ENCODE measurements at regions of chr19 and their contacts with region 1.

Region 1: GRCh38 chr19:43555185-43555770 is 20.0 kb downstream of the XRCC1 start:
- DNase-seq: peak; percentile 93
- H3K4me3 Mint-ChIP-seq: no peak overlapping the region
- H3K27ac Mint-ChIP-seq: peak overlapping the region; percentile 44
- H3K4me1 Mint-ChIP-seq: peaks cover 13% of the 10 kb centered on the region
- H3K27me3 Mint-ChIP-seq: no peaks in the 10 kb centered on the region

Region 2: DNA sequence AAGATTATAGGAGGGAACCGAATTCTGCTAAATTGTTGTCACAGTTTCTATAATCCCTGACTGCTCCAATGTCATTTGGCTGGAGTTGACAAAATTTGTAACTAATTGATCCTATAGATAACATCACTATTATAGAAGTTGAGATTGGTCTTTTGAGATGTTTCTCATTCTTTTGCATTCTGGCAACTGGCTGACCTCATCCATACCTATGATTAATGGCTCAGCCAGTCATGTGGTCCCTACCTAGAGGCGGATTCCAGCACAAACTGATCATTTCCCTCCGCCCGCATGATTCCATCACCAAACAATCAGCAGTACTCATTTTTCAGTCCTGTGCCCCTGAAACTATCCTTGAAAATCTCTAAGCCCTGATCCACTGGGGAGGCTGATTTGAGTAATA is 477.0 kb before region 1 on chr19:
- CTCF ChIA-PET with region 1: no interaction called
- intact Hi-C with region 1: no loop called
- DNase-seq: no peak
- H3K4me3 Mint-ChIP-seq: no peak overlapping the region
- H3K27ac Mint-ChIP-seq: no peak overlapping the region
- H3K4me1 Mint-ChIP-seq: no peaks in the 10 kb centered on the region
- H3K27me3 Mint-ChIP-seq: no peaks in the 10 kb centered on the region

Region 3: DNA sequence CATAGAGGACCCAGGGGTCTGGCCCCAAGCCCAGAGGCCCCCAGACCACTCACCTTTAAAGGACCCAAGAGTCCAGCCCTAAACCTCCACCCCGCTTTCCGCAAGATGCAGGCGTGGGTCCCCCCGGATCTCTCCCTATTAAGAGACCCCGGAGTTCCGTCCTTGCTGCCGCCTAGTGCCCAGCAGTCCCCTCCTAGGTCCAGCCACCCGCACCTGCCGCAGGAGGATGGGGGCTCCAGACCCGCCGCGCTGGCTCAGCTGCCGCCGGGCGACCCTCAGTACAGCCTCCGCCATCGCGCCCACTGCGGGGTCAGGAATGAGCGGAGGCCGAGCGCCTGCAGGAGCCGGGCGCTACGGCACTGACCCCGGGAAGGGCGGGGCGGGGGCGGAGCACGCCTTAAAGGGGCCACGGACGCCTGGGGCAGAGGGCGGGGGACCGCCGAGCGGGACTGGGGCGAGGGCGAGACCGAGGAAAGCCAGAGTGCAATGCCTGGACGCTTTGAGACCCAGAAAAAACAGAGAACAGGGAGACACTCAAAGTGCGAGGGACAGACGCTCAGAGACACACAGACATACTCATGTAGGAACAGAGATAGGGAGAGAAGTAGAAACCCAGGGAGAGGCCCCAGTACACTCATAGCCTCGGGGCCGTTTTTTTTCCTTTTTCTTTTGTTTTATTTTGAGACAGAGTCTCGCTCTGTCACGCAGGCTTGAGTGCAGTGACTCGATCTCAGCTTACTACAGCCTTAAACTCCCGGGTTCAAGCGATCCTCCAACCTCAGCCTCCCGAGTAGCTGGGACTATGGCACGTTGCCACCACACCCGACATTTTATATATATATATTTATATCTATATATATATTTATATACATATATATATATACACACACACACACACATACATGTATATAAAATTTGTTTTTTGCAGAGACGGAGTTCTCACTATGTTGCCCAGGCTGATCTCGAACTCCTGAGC is 28.1 kb before region 1 on chr19 and contains the start of gene ETHE1:
- CTCF ChIA-PET with region 1: interaction called, 19 read pairs
- intact Hi-C with region 1: no loop called
- DNase-seq: peak; percentile 73
- H3K4me3 Mint-ChIP-seq: peak within 1 kb of the TSS; percentile 97
- H3K27ac Mint-ChIP-seq: peak within 1 kb of the TSS; percentile 96
- H3K4me1 Mint-ChIP-seq: peaks cover 22% of the 10 kb centered on the region
- H3K27me3 Mint-ChIP-seq: no peaks in the 10 kb centered on the region
- total RNA-seq, gene ETHE1: 62.1 to 64.4 TPM

Region 4: DNA sequence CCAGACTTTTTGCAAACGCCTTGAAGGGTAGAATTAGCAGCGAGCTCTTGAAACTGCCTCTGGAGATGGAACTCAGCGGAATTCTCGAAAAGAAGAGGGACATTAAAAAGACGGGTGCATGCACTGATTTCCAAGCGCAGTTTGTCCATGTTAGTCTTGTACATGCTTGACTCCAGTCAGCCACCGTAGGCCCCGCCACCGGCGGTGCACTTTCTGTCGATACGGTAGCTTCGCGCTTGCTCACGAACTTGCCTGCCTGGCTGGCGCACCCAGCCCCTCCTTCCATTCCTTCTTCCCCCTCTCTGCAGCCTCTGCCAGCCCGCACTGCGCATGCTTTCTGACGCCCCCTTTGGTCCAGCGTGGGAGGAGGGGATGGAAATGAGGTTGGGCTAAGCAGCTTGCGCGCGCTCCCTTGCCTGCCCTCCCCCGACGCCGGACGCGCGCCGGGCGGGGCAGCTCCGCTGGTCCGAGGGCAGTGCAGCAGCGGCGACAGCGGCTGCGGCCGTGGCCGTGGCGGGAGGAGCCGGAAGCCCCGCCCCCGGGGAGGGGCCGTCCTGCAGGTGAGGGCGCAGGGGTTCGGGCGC is 22.2 kb before region 1 on chr19 and contains the start of gene ZNF575:
- CTCF ChIA-PET with region 1: interaction called, 28 read pairs
- intact Hi-C with region 1: no loop called
- DNase-seq: peak; percentile 92
- H3K4me3 Mint-ChIP-seq: peak within 1 kb of the TSS; percentile 80
- H3K27ac Mint-ChIP-seq: peak within 1 kb of the TSS; percentile 88
- H3K4me1 Mint-ChIP-seq: peaks cover 19% of the 10 kb centered on the region
- H3K27me3 Mint-ChIP-seq: no peaks in the 10 kb centered on the region
- total RNA-seq, gene ZNF575: 3.1 to 5.2 TPM

Region 5: DNA sequence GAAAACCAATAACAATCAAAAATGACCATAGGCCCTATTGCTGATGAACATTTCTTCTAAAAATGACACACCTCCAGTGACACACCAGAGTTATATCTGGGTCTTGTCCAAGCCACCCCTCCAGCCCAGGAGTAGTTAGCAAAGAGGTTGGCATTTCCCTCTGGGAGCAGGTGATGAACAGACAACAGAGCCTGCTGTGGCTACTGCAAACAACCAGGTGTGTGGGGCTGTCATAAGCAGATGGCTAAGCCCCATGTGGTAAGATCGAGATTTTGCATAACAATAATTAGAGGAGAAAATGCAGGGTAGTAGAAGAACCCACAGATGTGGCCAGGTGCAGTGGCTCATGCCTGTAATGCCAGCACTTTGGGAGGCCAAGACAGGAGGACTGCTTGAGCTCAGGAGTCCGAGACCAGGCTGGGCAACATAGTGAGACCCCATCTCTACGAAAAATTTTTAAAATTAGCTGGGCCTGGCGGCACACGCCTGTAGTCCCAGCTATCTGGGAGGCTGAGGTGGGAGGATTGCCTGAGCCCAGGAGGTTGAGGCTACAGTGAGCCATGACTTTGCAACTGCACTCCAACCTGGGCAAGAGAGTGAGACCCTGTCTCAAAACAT is 15.0 kb after region 1 on chr19:
- CTCF ChIA-PET with region 1: interaction called, 28 read pairs
- intact Hi-C with region 1: no loop called
- DNase-seq: no peak
- H3K4me3 Mint-ChIP-seq: no peak overlapping the region
- H3K27ac Mint-ChIP-seq: no peak overlapping the region
- H3K4me1 Mint-ChIP-seq: peaks cover 22% of the 10 kb centered on the region
- H3K27me3 Mint-ChIP-seq: no peaks in the 10 kb centered on the region

Region 6: GRCh38 chr19:43575156-43575950 is 20.1 kb after region 1 on chr19 and contains the starts of genes PINLYP and XRCC1:
- CTCF ChIA-PET with region 1: interaction called, 28 read pairs
- intact Hi-C with region 1: no loop called
- DNase-seq: peak; percentile 99
- H3K4me3 Mint-ChIP-seq: peak within 1 kb of the TSS; percentile 95
- H3K27ac Mint-ChIP-seq: peak within 1 kb of the TSS; percentile 94
- H3K4me1 Mint-ChIP-seq: peaks cover 37% of the 10 kb centered on the region
- H3K27me3 Mint-ChIP-seq: no peaks in the 10 kb centered on the region
- total RNA-seq, gene PINLYP: 3.2 to 3.8 TPM
- total RNA-seq, gene XRCC1: 33.7 to 34.5 TPM

Region 7: GRCh38 chr19:43589678-43590077 is 34.4 kb after region 1 on chr19:
- CTCF ChIA-PET with region 1: interaction called, 95 read pairs
- intact Hi-C with region 1: loop called (anchors 1 kb)
- DNase-seq: no peak
- H3K4me3 Mint-ChIP-seq: no peak overlapping the region
- H3K27ac Mint-ChIP-seq: peak overlapping the region; percentile 54
- H3K4me1 Mint-ChIP-seq: peaks cover 16% of the 10 kb centered on the region
- H3K27me3 Mint-ChIP-seq: no peaks in the 10 kb centered on the region